ENCODE measurements at regions of chr9 and their contacts with region 1.

Region 1: GRCh38 chr9:112020680-112021596 is 124.3 kb downstream of the UGCG start:
- DNase-seq: peak; percentile 74
- H3K4me3 ChIP-seq: no peak overlapping the region
- H3K27ac ChIP-seq: peak overlapping the region; percentile 64
- H3K4me1 ChIP-seq: peaks cover 24% of the 10 kb centered on the region
- H3K27me3 ChIP-seq: no peaks in the 10 kb centered on the region
- CTCF ChIP-seq: no peak
- POLR2A ChIP-seq: no peak

Region 2: DNA sequence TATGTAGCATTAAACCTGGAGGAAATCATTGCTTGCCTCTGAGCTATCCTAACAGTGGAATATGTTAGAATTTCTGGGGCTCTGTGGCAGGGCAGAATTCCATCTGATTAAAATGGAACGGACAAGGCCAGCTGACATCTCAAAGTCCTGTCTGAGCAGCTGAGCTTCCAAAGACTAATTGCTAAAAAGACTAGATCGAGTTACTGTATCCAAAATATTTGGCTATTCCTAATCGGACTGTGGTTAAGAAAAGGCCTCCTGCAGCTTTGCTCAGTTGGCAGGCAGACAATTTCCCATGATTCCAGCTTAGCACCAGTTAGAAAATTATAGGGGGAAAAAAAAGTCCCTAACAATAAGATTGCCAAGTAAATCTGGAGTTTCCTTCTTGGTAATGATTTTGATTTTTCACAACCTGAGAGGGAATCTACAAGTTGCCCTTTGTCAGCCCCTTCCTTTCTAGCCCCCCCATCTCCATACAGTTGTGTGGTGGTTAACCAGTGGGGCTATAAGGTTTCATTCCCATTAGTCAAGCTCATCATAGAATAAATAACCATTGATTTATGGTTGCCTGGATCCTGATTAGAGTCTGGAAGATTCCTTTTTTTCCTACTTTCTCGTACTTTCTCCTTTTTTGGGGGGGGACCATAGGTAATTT is 447.9 kb before region 1 on chr9:
- CTCF ChIA-PET with region 1: no interaction called
- POLR2A ChIA-PET with region 1: no interaction called
- dilution Hi-C with region 1: no loop called
- intact Hi-C with region 1: no loop called
- DNase-seq: no peak
- H3K4me3 ChIP-seq: no peak overlapping the region
- H3K27ac ChIP-seq: no peak overlapping the region
- H3K4me1 ChIP-seq: no peaks in the 10 kb centered on the region
- H3K27me3 ChIP-seq: no peaks in the 10 kb centered on the region
- CTCF ChIP-seq: no peak
- POLR2A ChIP-seq: no peak

Region 3: GRCh38 chr9:111876179-111876578 is 144.8 kb before region 1 on chr9:
- CTCF ChIA-PET with region 1: no interaction called
- POLR2A ChIA-PET with region 1: no interaction called
- dilution Hi-C with region 1: no loop called
- intact Hi-C with region 1: no loop called
- DNase-seq: no peak
- H3K4me3 ChIP-seq: no peak overlapping the region
- H3K27ac ChIP-seq: no peak overlapping the region
- H3K4me1 ChIP-seq: no peaks in the 10 kb centered on the region
- H3K27me3 ChIP-seq: no peaks in the 10 kb centered on the region
- CTCF ChIP-seq: no peak
- POLR2A ChIP-seq: no peak

Region 4: GRCh38 chr9:111952559-111952958 is 68.4 kb before region 1 on chr9:
- CTCF ChIA-PET with region 1: interaction called, 10 read pairs
- POLR2A ChIA-PET with region 1: no interaction called
- dilution Hi-C with region 1: no loop called
- intact Hi-C with region 1: no loop called
- DNase-seq: peak; percentile 72
- H3K4me3 ChIP-seq: no peak overlapping the region
- H3K27ac ChIP-seq: peak overlapping the region; percentile 54
- H3K4me1 ChIP-seq: peaks cover 25% of the 10 kb centered on the region
- H3K27me3 ChIP-seq: no peaks in the 10 kb centered on the region
- CTCF ChIP-seq: no peak
- POLR2A ChIP-seq: no peak

Region 5: DNA sequence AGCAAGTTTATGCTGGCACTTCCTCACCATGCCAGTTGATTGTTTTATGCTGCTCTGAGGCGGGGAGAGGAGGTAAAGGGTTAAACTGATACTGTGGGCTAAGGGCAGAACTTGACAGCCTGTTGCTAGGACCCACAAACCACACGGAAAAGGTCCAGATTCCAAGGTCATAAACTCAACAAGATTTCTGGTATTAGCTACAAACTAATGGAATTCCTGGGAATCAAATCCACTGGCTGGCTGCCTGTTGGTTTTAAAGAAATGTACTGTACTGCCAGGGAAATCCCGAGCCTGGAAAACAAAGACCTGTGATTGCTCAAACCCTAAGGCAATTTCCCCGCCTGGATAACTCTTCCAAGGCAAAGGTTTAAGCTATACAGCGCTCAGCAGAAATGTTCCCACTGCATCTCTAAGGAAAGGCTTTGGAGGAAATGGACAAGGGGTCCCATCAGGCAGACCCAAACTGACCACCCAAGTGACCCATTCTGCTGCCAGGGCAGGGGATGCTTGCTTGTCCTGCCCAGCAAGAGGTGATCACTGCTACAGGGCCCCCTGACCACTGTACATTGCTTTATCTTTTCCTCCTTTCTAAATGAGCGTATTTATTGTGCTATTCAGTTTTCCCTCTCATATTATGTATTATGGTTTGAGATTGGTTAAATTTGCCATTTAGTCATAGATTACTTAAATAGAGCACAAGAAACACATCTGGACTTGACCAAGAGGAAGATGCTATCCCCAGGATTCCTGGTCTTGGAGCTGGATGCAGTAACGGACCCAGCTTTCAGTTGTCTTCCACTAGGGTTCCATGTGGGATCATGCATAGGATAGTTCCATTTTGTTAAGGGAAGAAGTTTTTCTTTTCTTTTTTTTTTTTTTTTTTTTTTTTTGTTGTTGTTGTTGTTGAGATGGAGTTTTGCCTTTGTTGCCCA is 29.9 kb after region 1 on chr9:
- CTCF ChIA-PET with region 1: interaction called, 5 read pairs
- POLR2A ChIA-PET with region 1: interaction called, 10 read pairs
- dilution Hi-C with region 1: no loop called
- intact Hi-C with region 1: no loop called
- DNase-seq: peak; percentile 92
- H3K4me3 ChIP-seq: no peak overlapping the region
- H3K27ac ChIP-seq: peak overlapping the region; percentile 80
- H3K4me1 ChIP-seq: peaks cover 31% of the 10 kb centered on the region
- H3K27me3 ChIP-seq: no peaks in the 10 kb centered on the region
- CTCF ChIP-seq: no peak
- POLR2A ChIP-seq: no peak

Region 6: GRCh38 chr9:112184946-112185345 is 164.0 kb after region 1 on chr9:
- CTCF ChIA-PET with region 1: no interaction called
- POLR2A ChIA-PET with region 1: no interaction called
- dilution Hi-C with region 1: no loop called
- intact Hi-C with region 1: no loop called
- DNase-seq: no peak
- H3K4me3 ChIP-seq: no peak overlapping the region
- H3K27ac ChIP-seq: no peak overlapping the region
- H3K4me1 ChIP-seq: peaks cover 5% of the 10 kb centered on the region
- H3K27me3 ChIP-seq: no peaks in the 10 kb centered on the region
- CTCF ChIP-seq: no peak
- POLR2A ChIP-seq: no peak

Region 7: GRCh38 chr9:112308588-112308987 is 287.6 kb after region 1 on chr9:
- CTCF ChIA-PET with region 1: no interaction called
- POLR2A ChIA-PET with region 1: no interaction called
- dilution Hi-C with region 1: no loop called
- intact Hi-C with region 1: no loop called
- DNase-seq: no peak
- H3K4me3 ChIP-seq: no peak overlapping the region
- H3K27ac ChIP-seq: no peak overlapping the region
- H3K4me1 ChIP-seq: no peaks in the 10 kb centered on the region
- H3K27me3 ChIP-seq: no peaks in the 10 kb centered on the region
- CTCF ChIP-seq: no peak
- POLR2A ChIP-seq: no peak

Measured in endothelial cell of umbilical vein (primary cell).